PC-9 (cell line): ENCODE measurements at regions of chr14 and their contacts with region 1.

Region 1: DNA sequence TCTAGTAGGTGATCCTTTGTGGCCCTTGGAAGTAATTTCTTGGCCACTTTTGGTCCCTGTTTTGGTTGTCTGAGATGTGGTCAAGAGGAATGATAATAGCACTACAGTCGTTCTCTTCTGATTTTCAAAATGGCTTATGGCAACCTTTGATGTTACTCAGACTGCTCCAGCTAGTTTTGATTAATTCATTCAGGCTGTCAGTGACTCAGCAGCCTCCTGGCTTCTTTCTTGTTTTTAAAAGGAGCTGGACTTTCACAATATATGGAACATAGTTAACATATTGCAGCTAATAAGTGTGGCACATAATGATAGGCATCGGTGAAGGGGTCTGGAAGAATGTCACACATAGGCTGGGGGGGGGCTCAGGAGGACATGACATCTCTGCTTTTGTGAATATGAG is 47.4 kb downstream of the WDR20 start:
- DNase-seq: peak; percentile 56 to 98
- H3K4me3 ChIP-seq: peak overlapping the region; percentile 31; the same call in 1 of the 2 replicates
- H3K27ac ChIP-seq: peak overlapping the region; percentile 90
- H3K4me1 ChIP-seq: peaks cover 61% of the 10 kb centered on the region
- H3K27me3 ChIP-seq: no peaks in the 10 kb centered on the region
- CTCF ChIP-seq: no peak

Region 2: DNA sequence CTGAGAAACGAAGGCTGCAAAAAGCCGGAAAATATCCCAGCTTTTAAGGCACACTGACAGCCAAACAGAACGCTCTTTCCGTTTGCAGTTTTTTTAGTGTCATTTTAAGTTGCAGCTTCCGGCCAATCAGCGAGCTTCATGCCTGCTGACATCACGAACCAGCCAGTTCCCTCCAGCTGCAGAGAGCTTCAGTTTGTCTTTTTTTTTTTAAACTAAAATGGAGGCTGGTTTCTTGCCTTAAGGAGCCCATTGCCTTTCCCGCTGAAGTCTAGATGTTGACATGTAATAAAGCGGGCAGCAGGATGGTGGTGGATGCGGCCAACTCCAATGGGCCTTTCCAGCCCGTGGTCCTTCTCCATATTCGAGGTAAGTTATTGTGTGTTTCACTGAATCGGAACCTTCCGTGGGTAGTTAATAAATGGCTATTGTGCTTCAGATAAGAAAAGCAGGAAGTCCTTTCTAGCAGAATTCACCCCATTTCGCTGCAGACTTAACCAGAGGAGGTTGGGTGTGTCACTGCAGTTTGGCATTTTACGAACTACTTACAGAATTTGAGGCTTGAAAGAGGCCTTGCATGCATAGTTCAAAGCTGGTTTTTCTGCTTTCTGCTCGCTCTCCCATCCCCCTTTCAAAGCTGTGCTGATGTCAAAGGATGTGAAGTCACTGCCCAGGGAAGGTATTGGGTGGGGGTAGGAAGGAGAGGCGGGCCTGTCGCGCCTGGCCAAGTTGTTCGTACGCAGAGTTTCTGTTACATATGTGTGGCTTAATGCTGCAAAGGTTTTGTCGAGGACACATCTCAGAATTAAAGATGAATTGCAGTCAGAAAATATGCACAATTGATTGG is 377.2 kb before region 1 on chr14:
- CTCF ChIA-PET with region 1: interaction called, 12 read pairs
- POLR2A ChIA-PET with region 1: interaction called, 3 read pairs
- intact Hi-C with region 1: no loop called
- DNase-seq: peak; percentile 94 to 99
- H3K4me3 ChIP-seq: peak overlapping the region; percentile 62
- H3K27ac ChIP-seq: peak overlapping the region; percentile 92
- H3K4me1 ChIP-seq: peaks cover 28% of the 10 kb centered on the region
- H3K27me3 ChIP-seq: no peaks in the 10 kb centered on the region
- CTCF ChIP-seq: no peak

Region 3: GRCh38 chr14:101964297-101965144 is 222.5 kb before region 1 on chr14 and contains the start of gene DYNC1H1:
- CTCF ChIA-PET with region 1: interaction called, 11 read pairs
- POLR2A ChIA-PET with region 1: no interaction called
- intact Hi-C with region 1: loop called (anchors 2 kb)
- DNase-seq: peak; percentile 83 to 99
- H3K4me3 ChIP-seq: peak within 1 kb of the TSS; percentile 76
- H3K27ac ChIP-seq: peak within 1 kb of the TSS; percentile 75
- H3K4me1 ChIP-seq: peaks cover 59% of the 10 kb centered on the region
- H3K27me3 ChIP-seq: no peaks in the 10 kb centered on the region
- CTCF ChIP-seq: no peak; the same call in 1 of the 2 replicates
- total RNA-seq, gene DYNC1H1: 1,203 and 1,268 TPM in 2 replicates

Region 4: DNA sequence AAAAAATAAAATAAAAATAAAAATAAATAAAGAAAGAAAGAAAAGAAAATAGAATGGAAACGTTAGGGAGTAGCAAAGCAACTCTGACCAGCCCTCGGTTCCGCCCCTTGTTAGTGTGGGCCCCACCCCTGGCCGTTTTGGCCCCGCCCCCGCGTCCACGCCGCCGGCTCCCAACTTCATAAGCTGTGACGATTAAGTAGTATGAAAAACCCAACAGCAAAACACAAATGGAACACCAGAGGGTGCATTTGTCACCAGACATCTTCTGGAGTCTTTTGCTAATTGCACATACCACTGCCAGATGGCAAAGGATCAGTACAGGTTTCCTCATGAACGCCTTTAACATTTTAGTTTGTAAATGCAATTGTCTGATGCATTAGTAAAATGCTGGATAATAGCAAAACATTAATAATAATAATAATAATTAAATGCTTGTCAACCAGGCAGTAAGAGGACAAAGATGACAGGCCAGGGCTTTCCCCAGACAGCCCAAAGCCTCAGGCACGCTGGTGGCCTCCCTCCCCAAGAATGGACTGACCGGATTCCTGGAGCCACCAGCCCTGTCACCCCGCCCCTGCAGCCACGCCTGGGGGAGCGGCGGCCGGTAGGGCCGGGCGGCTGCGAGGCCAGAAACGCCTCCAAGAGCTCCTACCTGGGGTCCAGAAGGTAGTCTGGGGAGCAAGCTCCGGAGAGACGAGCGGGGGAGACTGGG is 123.8 kb before region 1 on chr14:
- CTCF ChIA-PET with region 1: no interaction called
- POLR2A ChIA-PET with region 1: interaction called, 5 read pairs
- intact Hi-C with region 1: loop called (anchors 1 kb)
- DNase-seq: peak; percentile 95 to 97
- H3K4me3 ChIP-seq: peak overlapping the region; percentile 48
- H3K27ac ChIP-seq: peak overlapping the region; percentile 57
- H3K4me1 ChIP-seq: peaks cover 23% of the 10 kb centered on the region
- H3K27me3 ChIP-seq: no peaks in the 10 kb centered on the region
- CTCF ChIP-seq: peak; percentile 88

Region 5: GRCh38 chr14:102086972-102087761 is 99.9 kb before region 1 on chr14 and contains the start of gene HSP90AA1:
- CTCF ChIA-PET with region 1: no interaction called
- POLR2A ChIA-PET with region 1: interaction called, 42 read pairs
- intact Hi-C with region 1: no loop called
- DNase-seq: peak; percentile 88 to 100
- H3K4me3 ChIP-seq: peak within 1 kb of the TSS; percentile 89
- H3K27ac ChIP-seq: peak within 1 kb of the TSS; percentile 82
- H3K4me1 ChIP-seq: peaks cover 41% of the 10 kb centered on the region
- H3K27me3 ChIP-seq: no peaks in the 10 kb centered on the region
- CTCF ChIP-seq: peak; percentile 28; the same call in 1 of the 2 replicates
- total RNA-seq, gene HSP90AA1: 1,314 and 1,931 TPM in 2 replicates

Region 6: DNA sequence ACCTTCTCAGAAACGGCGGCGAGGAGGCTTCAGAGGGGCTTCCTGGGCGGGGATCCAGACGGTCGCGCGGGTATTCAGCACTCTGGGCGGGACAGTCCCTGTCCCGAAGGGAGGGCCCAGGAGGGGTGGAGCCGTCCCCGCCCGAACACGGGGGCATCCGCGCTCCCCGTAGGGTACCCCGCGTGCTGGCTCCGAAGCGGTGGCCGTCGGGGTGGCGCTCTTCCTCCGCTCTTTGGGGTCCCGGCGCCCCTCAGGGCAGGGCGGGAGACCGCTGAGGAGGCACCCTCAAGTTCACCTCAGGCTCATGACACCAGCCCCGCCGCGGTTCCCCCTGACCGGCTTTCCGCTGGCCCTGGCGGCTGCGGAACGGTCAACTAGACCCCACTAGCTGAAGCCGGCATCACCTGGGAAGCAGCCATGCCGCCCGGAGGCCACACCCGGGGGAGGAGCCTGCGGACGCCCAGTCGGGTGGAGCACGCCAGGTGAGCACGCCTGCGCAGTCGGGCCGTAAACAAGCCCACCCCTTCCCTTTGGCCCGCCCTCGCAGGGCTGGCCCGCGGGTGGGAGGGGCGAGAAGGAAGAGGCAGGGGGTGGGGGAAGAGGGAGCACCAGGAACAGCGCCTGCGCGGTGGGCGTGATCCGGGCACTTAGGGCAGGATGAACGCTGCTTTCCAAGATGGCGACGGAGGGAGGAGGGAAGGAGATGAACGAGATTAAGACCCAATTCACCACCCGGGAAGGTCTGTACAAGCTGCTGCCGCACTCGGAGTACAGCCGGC is 47.6 kb before region 1 on chr14 and contains the start of gene WDR20:
- CTCF ChIA-PET with region 1: interaction called, 4 read pairs
- POLR2A ChIA-PET with region 1: interaction called, 4 read pairs
- intact Hi-C with region 1: loop called (anchors 1 kb)
- DNase-seq: peak; percentile 98 to 100
- H3K4me3 ChIP-seq: peak within 1 kb of the TSS; percentile 75
- H3K27ac ChIP-seq: peak within 1 kb of the TSS; percentile 44
- H3K4me1 ChIP-seq: peaks cover 31% of the 10 kb centered on the region
- H3K27me3 ChIP-seq: no peaks in the 10 kb centered on the region
- CTCF ChIP-seq: peak; percentile 19; the same call in 1 of the 2 replicates
- total RNA-seq, gene WDR20: 62.2 and 93.5 TPM in 2 replicates

Region 7: GRCh38 chr14:102560458-102561154 is 373.5 kb after region 1 on chr14:
- CTCF ChIA-PET with region 1: no interaction called
- POLR2A ChIA-PET with region 1: interaction called, 19 read pairs
- intact Hi-C with region 1: no loop called
- DNase-seq: no peak
- H3K4me3 ChIP-seq: no peak overlapping the region
- H3K27ac ChIP-seq: no peak overlapping the region
- H3K4me1 ChIP-seq: no peaks in the 10 kb centered on the region
- H3K27me3 ChIP-seq: no peaks in the 10 kb centered on the region
- CTCF ChIP-seq: no peak